Cardiac septum (tissue), 1 donor: ENCODE measurements at regions of chr13 and their contacts with region 1.

Region 1: GRCh38 chr13:51814825-51815650 is 11.1 kb upstream of the DHRS12 start:
- DNase-seq: peak; percentile 82

Region 2: DNA sequence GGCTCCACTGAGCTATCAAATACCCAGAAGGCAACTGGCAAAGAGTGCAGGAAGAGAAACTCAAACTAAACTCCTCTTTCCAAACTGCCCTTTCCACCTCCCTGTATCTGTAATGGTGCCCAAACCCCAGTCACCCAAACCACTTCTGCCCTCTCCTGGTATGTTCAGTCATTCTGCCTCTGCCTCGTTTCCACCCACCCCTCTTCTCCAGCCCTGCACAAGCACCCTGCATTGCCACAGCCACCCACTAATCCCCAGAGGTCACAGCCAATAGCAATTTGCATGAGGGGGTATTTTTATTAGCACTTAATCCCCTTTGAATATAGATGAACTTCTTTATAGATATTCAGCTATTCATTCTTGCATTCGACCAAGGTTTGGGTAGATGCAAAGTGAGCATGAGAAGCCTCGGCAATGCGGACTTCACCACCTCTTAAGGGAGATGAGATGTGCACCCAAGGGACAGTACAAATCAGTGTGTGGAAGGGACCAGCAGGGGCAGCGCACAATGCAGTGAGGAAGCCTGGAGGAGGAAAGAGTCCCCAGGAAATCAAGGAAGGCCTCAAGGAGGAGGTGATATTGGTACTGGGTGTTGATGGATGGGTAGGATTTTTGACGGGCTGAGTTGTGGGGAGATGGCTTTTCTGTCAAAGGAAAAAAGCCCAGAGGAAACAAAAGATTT is 17.6 kb after region 1 on chr13:
- intact Hi-C with region 1: loop called (anchors 1 kb)
- DNase-seq: peak; percentile 80

Region 3: DNA sequence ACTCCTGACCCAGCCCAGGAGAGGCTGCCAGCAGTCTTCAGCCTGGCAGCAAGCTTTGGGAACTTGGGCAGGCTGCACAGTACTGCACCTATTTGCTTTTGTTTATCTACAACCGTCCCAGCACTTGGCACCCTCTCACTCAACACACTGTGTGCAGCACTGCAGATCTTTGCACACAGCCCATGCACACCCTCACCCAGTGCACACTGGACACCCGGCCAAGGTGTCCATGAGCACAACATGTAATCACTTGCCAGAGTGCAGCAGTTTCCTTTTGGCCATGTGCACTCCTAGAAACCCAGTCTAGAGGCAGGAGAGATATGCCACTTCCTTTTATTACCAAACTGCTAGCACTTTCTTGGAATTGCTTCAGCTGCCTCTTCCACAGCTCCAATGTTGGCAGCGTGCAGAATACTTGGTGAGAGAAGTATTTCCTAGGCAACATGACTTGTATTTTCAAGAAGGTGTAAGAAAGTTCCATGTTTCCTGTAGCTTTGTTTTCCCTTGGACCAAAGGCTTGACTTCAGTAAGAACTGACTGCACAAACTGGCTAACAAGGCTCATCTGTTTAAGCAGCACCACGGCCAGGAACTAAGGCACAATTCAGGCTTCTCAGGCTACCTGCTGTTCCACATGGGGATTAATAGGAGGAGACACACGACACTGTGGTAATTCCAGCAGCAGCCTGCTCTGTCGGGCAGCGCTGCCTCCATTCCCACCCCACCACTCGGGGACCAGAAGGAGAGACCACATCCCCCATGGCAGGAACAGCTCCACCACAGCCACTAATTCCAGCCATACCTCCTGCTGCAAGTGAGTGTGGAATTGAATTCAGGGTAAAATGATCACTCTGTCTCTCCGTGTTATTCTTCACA is 180.9 kb after region 1 on chr13:
- intact Hi-C with region 1: loop called (anchors 10 kb)
- DNase-seq: no peak

Region 4: DNA sequence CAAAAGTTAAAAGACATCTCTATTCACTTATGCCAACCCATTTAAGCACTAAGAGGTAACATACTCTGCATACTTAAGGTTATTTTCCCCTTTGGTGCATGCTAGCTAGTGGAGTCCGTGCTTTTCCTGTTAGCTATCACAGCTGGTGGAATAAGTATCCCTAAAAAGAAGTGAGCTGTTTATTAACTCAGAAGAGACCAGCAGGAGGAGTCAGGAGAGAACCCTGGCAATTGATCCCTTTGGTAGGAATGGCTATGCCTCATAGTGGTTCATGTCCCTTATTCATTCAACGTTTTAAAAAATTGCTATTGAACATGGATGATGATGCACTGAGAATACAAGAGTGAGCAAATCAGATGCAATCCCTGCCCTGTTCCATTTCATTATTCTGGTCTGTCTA is 326.3 kb after region 1 on chr13:
- intact Hi-C with region 1: no loop called
- DNase-seq: no peak

Region 5: GRCh38 chr13:52187029-52187423 is 372.0 kb after region 1 on chr13:
- intact Hi-C with region 1: loop called (anchors 10 kb)
- DNase-seq: no peak